MCF 10A (cell line): ENCODE measurements at regions of chr16 and their contacts with region 1.

Region 1: DNA sequence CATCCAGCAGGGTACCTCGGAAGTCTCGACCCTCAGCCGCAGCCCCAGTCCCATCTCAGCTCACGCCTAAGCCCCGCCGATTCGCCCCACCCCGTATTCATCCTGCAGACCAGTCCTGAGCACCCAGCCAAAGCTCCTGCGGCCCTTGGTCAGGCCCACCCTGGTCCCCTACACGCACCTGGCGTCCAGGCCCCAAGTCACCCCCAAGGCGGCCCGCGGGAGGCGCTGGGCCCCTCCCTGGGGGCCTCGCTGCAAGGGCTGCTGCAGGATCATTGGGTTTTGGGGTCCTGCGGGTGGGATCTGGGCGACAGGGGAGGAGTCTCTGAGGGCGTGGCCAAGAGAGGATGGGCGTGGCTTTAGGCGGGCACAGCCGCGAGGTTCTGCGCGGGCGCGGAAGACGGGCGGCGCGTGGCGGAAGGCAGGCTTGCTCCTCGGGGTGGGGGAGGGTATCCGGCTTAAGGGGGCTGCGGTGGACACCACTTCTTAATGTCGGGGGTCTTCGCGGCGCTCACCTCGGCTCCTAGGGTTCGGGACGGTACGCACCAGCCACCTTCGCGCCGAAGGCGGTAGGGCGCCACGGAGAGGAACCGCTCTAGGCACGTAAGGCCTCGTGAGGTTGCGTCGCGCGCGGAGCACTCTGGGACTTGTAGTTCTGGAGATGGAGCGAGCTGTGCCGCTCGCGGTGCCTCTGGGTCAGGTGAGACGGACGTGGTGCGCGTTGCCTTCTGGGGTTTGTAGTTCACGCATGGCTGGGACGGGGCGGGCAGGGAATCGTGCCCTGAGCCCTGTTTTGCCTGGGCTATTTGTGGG is at the starts of genes HCFC1R1 and THOC6:
- DNase-seq: peak; percentile 98
- H3K4me3 Mint-ChIP-seq: peak within 1 kb of the TSS; percentile 82
- H3K27ac Mint-ChIP-seq: peak within 1 kb of the TSS; percentile 94
- H3K4me1 Mint-ChIP-seq: peaks cover 23% of the 10 kb centered on the region
- H3K27me3 Mint-ChIP-seq: no peaks in the 10 kb centered on the region
- CTCF ChIP-seq: no peak
- total RNA-seq, gene HCFC1R1: 13.6 and 20.4 TPM in 2 replicates
- total RNA-seq, gene THOC6: 36.8 and 53.1 TPM in 2 replicates

Region 2: DNA sequence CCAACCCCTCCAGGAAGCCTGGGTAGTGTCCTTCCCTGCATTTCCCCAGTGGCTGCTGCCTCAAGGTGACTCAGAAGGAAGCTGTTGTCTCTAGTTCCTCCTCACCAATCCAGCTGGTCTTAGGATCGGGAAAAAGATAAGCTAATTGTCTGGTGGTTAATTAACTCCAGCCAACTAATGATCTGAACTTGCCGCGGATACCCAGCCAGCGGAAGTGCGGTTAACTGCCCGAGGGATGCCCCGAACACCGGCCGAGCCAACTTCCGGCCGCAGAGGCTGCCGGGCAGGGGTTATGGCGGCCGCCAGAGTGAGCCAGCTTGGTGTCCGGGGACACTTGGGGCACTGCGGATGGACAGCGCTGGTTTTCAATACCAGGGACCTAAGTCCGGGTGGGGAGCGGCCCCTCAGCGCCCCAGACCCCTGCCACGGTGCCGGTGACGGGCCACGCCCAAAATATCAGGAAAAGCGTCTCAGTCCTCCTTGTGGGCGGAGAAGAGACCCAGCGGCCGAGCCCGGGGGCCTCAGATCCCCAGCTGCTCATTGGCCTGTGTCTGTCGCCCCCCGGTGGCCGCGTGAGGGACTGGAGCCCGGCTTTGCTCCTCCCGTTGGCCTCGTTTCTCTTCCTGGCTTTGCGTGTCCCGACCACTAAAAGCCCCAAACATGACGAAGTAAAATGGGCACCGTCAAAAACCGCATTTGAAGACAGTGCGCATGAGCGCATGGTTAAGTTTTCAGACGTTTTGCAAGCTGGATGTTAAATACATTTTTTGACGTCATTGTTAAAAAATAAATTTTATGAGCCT is 155.7 kb before region 1 on chr16:
- CTCF ChIA-PET with region 1: no interaction called
- POLR2A ChIA-PET with region 1: no interaction called
- intact Hi-C with region 1: no loop called
- DNase-seq: peak; percentile 91
- H3K4me3 Mint-ChIP-seq: peak overlapping the region; percentile 89
- H3K27ac Mint-ChIP-seq: peak overlapping the region; percentile 94
- H3K4me1 Mint-ChIP-seq: peaks cover 4% of the 10 kb centered on the region
- H3K27me3 Mint-ChIP-seq: no peaks in the 10 kb centered on the region
- CTCF ChIP-seq: peak; percentile 94

Region 3: DNA sequence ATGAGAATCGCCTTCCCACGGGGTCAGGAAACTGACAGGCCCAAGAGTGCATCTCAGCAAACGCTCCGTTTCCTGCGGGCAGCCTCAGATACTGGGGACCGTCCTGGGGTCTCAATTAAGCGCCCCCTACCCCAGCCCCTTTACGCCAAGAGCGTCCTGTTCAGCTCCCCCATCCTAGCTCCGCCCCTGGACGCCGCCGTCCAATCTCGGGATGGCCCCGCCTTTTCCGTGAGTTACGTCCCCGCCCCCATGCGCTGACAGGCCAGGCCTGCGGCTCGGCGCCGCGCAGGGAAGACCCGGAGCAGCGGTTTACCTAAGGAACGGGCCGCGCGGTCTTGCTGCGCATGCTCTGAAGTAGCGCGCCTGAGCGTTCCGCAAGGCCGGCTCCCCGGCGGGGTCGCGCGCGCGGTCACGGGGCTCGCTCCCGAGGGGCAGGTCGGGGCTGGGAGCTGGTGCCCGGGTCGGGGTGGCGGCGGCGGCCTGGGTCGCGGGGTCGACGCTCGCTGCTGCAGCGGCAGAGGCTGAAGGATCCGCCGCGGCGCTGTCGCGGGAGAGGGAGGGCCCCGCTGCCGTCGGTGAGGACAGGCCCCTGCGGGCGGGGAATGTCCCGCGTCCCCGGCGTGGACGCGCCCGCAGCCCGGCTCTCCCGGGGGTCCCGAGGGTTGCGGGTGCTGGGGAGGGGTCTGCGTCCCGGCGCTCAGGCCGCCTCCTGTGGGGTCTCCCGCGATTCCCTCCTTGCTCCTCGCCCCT is 112.1 kb before region 1 on chr16 and contains the start of gene FLYWCH1:
- CTCF ChIA-PET with region 1: interaction called, 3 read pairs
- POLR2A ChIA-PET with region 1: interaction called, 25 read pairs
- intact Hi-C with region 1: no loop called
- DNase-seq: peak; percentile 97
- H3K4me3 Mint-ChIP-seq: peak within 1 kb of the TSS; percentile 74
- H3K27ac Mint-ChIP-seq: peak within 1 kb of the TSS; percentile 81
- H3K4me1 Mint-ChIP-seq: peaks cover 19% of the 10 kb centered on the region
- H3K27me3 Mint-ChIP-seq: no peaks in the 10 kb centered on the region
- CTCF ChIP-seq: no peak
- total RNA-seq, gene FLYWCH1: 76.3 and 86.2 TPM in 2 replicates

Region 4: DNA sequence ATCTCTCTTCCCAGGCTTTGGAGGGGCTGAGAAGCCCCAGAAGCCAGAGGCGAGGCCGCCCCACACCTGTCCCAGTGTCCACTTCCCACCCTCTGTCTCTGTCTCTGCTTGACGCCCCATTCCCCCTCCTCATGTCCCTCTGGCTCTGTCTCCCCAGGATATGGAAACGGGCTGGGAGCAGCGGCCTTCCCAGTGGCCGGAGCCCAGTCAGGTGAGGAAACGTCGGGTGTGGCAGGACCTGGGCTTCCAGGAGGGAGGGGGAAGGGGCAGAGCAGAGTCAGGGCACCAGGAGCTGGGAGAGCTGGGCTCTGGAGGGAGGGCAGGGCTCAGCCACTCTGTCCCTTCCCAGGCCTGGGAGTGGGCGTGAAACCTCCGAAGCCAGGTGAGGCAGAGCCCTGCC is 33.0 kb before region 1 on chr16:
- CTCF ChIA-PET with region 1: interaction called, 4 read pairs
- POLR2A ChIA-PET with region 1: interaction called, 12 read pairs
- intact Hi-C with region 1: no loop called
- DNase-seq: peak; percentile 56
- H3K4me3 Mint-ChIP-seq: no peak overlapping the region
- H3K27ac Mint-ChIP-seq: no peak overlapping the region
- H3K4me1 Mint-ChIP-seq: peaks cover 6% of the 10 kb centered on the region
- H3K27me3 Mint-ChIP-seq: no peaks in the 10 kb centered on the region
- CTCF ChIP-seq: no peak

Region 5: DNA sequence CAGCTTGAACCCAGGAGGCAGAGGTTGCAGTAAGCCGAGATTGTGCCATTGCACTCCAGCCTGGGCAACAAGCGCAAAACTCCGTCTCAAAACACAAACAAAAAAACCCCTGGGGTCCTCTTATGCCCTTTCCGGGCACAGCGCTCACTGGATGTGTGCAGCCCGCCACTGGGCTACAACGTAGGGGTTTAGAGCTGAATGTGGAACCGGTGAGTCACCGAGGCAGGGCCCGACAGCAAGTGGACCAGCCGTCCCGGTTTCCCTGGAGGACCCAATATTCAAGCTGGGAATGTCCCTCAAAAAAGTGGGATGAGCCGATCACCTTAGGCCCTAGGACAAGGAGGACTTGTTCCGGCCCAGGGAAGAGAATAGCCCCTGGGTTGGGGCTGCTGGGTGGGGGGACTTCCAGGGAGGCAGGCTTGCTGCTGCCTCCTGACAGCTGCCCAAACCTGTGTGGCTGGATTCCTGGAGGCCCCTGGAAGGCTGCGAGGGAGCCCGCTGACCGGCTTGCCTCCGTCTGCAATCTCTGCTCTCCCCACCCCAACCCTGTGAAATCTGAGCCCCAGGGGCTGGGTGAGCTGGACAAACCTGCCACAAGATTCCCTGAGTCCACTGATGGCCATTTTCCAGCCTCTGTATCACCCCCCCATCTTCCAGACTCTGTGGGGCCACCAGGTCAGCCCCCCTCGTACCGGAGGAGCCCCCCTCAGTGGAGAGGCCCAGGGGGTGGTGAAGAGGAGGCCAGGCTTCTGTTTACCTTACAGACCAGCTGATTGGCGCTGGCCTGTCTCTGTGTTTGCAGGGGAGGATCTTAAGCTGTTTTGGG is 14.1 kb before region 1 on chr16:
- CTCF ChIA-PET with region 1: interaction called, 121 read pairs
- POLR2A ChIA-PET with region 1: interaction called, 41 read pairs
- intact Hi-C with region 1: loop called (anchors 1 kb)
- DNase-seq: no peak
- H3K4me3 Mint-ChIP-seq: no peak overlapping the region
- H3K27ac Mint-ChIP-seq: no peak overlapping the region
- H3K4me1 Mint-ChIP-seq: no peaks in the 10 kb centered on the region
- H3K27me3 Mint-ChIP-seq: no peaks in the 10 kb centered on the region
- CTCF ChIP-seq: no peak

Region 6: GRCh38 chr16:3046506-3047386 is 22.9 kb after region 1 on chr16 and contains the start of gene MMP25:
- CTCF ChIA-PET with region 1: interaction called, 51 read pairs
- POLR2A ChIA-PET with region 1: interaction called, 7 read pairs
- intact Hi-C with region 1: no loop called
- DNase-seq: no peak
- H3K4me3 Mint-ChIP-seq: peak within 1 kb of the TSS; percentile 43
- H3K27ac Mint-ChIP-seq: no peak within 1 kb of the TSS
- H3K4me1 Mint-ChIP-seq: no peaks in the 10 kb centered on the region
- H3K27me3 Mint-ChIP-seq: peaks cover 52% of the 10 kb centered on the region
- CTCF ChIP-seq: no peak
- total RNA-seq, gene MMP25: 0.26 and 0.64 TPM in 2 replicates